CD4-positive, alpha-beta T cell (primary cell): ENCODE measurements at regions of chr22 and their contacts with region 1.

Region 1: DNA sequence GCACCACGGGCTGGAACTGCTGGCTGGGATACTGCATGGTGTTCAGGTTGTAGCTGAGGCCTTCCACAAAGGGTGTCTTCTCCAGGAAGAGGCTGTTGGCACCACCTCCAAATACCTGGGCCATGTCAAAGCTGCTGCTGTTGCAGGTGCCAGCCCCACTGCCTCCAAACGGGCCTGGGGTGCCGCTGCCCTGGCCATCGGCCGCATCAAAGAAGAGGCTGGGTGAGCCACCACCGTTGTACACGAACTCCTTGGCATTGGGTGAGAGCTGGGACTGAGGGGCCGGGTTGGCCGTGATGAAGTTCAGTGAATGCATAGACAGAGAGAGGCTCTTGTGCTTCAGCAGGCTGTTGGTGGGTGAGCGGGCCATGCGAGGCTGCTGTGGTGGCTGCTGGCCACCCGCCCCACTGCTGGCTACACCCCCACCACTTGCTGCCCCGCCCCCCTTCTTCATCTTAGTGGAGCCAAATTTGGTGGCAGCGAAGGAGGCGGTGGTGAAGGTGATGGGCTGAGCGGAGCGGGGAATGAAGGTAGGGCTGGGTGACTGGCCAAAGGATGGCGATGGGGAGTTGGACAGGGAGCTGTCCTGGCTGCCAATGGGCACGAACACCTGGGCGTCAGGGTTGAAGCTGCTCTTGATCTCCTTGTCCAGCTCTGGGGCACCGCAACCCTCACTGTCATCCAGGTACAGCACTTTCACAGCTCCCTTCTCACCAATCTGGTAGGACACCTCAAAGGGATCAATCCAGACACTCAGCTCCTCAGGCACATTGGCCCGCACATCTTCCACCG is 10.1 kb downstream of the TOB2 start:
- DNase-seq: no peak
- ATAC-seq: no peak
- H3K4me3 ChIP-seq: no peak overlapping the region
- H3K4me3 Mint-ChIP-seq: no peak overlapping the region
- H3K27ac ChIP-seq: no peak overlapping the region
- H3K27ac Mint-ChIP-seq: peak overlapping the region; percentile 9
- H3K4me1 ChIP-seq: peaks cover 22% of the 10 kb centered on the region
- H3K4me1 Mint-ChIP-seq: no peaks in the 10 kb centered on the region
- H3K27me3 ChIP-seq: no peaks in the 10 kb centered on the region
- H3K27me3 Mint-ChIP-seq: no peaks in the 10 kb centered on the region
- CTCF ChIP-seq: no peak

Region 2: DNA sequence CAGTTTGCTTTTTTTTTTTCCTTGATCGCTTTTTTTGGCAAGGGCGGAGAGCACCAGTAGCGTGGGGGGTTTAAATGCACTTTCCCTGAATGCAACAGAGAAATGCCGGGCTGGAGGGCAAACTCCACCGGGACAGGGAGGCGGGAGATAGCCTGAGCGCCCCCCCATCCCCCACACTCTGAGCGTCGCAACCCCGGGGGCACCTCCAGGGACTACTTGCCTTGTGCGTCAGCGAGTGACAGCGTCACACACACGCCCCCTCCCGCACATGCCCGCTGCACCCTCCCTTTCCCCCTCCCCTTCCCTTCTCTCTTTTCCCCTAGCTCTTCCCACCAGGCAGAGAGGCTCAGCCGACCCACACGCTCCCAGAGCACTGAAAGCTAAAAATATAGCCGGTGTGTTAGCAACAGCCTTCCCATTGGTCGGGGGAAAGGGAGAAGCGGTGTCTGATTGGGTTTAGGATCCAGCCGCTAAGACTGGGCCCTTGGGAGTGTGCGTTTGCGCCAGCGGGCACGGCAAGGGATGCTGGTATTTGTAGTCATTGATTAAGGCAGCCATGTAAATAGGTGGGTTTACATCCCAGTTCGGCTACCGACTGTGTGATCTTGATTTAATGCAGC is 11.8 kb after region 1 on chr22:
- CTCF ChIA-PET with region 1: no interaction called
- POLR2A ChIA-PET with region 1: interaction called, 11 read pairs
- intact Hi-C with region 1: no loop called
- DNase-seq: peak; percentile 79 to 97 (median 84)
- ATAC-seq: peak; percentile 73
- H3K4me3 ChIP-seq: peak overlapping the region; percentile 98
- H3K4me3 Mint-ChIP-seq: peak overlapping the region; percentile 94
- H3K27ac ChIP-seq: peak overlapping the region; percentile 97 to 98
- H3K27ac Mint-ChIP-seq: peak overlapping the region; percentile 95
- H3K4me1 ChIP-seq: peaks cover 41% of the 10 kb centered on the region
- H3K4me1 Mint-ChIP-seq: peaks cover 29% of the 10 kb centered on the region
- H3K27me3 ChIP-seq: no peaks in the 10 kb centered on the region
- H3K27me3 Mint-ChIP-seq: no peaks in the 10 kb centered on the region
- CTCF ChIP-seq: no peak